ENCODE measurements at regions of chr6 and their contacts with region 1.

Region 1: GRCh38 chr6:42043787-42044475 is 6.4 kb upstream of the TAF8 start:
- DNase-seq: peak; percentile 90
- ATAC-seq: peak; percentile 67

Region 2: GRCh38 chr6:41602864-41603608 is 440.9 kb before region 1 on chr6:
- intact Hi-C with region 1: loop called (anchors 10 kb)
- DNase-seq: peak; percentile 85
- ATAC-seq: peak; percentile 77

Region 3: GRCh38 chr6:41705996-41706835 is 337.7 kb before region 1 on chr6:
- intact Hi-C with region 1: loop called (anchors 10 kb)
- DNase-seq: peak; percentile 91
- ATAC-seq: peak; percentile 88

Region 4: GRCh38 chr6:41846666-41847237 is 197.2 kb before region 1 on chr6:
- intact Hi-C with region 1: loop called (anchors 2 kb)
- DNase-seq: no peak
- ATAC-seq: peak; percentile 85

Region 5: DNA sequence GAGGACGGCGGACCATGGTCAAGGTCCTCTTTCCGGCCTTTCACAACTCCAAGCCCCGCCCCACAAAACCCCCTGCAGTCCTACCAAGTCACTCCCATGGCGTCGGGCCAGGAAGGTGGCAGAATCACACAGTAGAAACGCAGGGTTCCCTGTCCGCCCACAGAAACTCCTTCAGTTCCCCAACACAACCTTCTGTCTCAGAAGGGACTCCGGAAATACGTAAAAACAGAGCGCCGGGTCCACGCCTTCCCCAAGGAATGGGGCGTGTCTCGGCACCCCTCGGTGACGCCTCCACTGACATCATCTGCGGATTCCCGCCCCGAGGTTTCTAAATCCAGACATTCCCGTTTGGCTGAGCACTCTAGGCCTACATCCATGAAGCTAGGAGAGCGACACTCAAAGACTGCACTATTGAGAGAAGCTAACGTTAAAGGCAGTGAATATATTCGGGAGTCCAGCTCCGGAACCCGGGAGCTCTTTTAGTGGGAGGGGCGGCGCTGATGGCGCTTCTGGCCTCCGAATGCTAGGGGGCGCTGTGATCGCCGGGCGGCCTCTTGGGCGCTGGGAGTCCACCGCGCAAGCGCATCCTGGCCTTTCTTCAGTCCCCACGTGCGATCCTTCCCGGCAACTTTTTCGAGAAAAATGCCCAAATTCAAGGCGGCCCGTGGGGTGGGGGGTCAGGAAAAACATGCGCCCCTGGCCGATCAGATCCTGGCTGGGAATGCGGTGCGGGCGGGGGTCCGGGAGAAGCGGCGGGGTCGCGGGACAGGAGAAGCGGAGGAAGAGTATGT is 122.8 kb before region 1 on chr6 and contains the starts of genes BYSL and MED20:
- intact Hi-C with region 1: loop called (anchors 1 kb)
- DNase-seq: peak; percentile 96
- ATAC-seq: peak; percentile 96
- total RNA-seq, gene BYSL: 9.6 TPM
- total RNA-seq, gene MED20: 22.9 TPM

Region 6: GRCh38 chr6:41941280-41942066 is 102.5 kb before region 1 on chr6 and contains the start of gene CCND3:
- intact Hi-C with region 1: loop called (anchors 2 kb)
- DNase-seq: peak; percentile 98
- ATAC-seq: peak; percentile 95
- total RNA-seq, gene CCND3: 51.5 TPM